ENCODE measurements at regions of chr10 and their contacts with region 1.

Region 1: GRCh38 chr10:84205049-84205852 is 10.9 kb downstream of the CDHR1 start:
- DNase-seq: peak; percentile 78
- ATAC-seq: peak; percentile 69

Region 2: GRCh38 chr10:84149854-84150253 is 55.4 kb before region 1 on chr10:
- intact Hi-C with region 1: loop called (anchors 2 kb)
- DNase-seq: no peak
- ATAC-seq: no peak

Measured in Right ventricle myocardium inferior (tissue), 1 donor.